B cell (primary cell): ENCODE measurements at regions of chr6 and their contacts with region 1.

Region 1: GRCh38 chr6:27893059-27893835 is 18.9 kb downstream of the OR2B2 start:
- DNase-seq: peak; percentile 97
- ATAC-seq: peak; percentile 67
- H3K4me3 ChIP-seq: peak overlapping the region; percentile 68 to 100 (median 88)
- H3K4me3 Mint-ChIP-seq: no peak overlapping the region
- H3K27ac ChIP-seq: peak overlapping the region; percentile 76 to 77
- H3K27ac Mint-ChIP-seq: no peak overlapping the region
- H3K4me1 ChIP-seq: peaks cover 18 to 38% of the 10 kb centered on the region in 2 donors
- H3K4me1 Mint-ChIP-seq: peaks cover 36% of the 10 kb centered on the region
- H3K27me3 ChIP-seq: no peaks in the 10 kb centered on the region
- H3K27me3 Mint-ChIP-seq: no peaks in the 10 kb centered on the region
- CTCF ChIP-seq: no peak

Region 2: GRCh38 chr6:26122793-26123674 is 1770.2 kb before region 1 on chr6:
- CTCF ChIA-PET with region 1: interaction called, 4 read pairs
- POLR2A ChIA-PET with region 1: interaction called, 7 read pairs
- intact Hi-C with region 1: loop called (anchors 5 kb)
- DNase-seq: peak; percentile 97
- ATAC-seq: peak; percentile 59
- H3K4me3 ChIP-seq: peak overlapping the region; percentile 87 to 100 (median 96)
- H3K4me3 Mint-ChIP-seq: peak overlapping the region; percentile 93
- H3K27ac ChIP-seq: peak overlapping the region; percentile 87 to 88
- H3K27ac Mint-ChIP-seq: peak overlapping the region; percentile 97
- H3K4me1 ChIP-seq: peaks cover 19 to 23% of the 10 kb centered on the region in 2 donors
- H3K4me1 Mint-ChIP-seq: peaks cover 26% of the 10 kb centered on the region
- H3K27me3 ChIP-seq: no peaks in the 10 kb centered on the region
- H3K27me3 Mint-ChIP-seq: no peaks in the 10 kb centered on the region
- CTCF ChIP-seq: no peak

Region 3: GRCh38 chr6:27146706-27147505 is 746.3 kb before region 1 on chr6:
- CTCF ChIA-PET with region 1: interaction called, 4 read pairs
- POLR2A ChIA-PET with region 1: interaction called, 81 read pairs
- intact Hi-C with region 1: loop called (anchors 1 kb)
- DNase-seq: peak; percentile 98
- ATAC-seq: peak; percentile 85
- H3K4me3 ChIP-seq: peak overlapping the region; percentile 72 to 100 (median 88)
- H3K4me3 Mint-ChIP-seq: no peak overlapping the region
- H3K27ac ChIP-seq: peak overlapping the region; percentile 76 to 92
- H3K27ac Mint-ChIP-seq: no peak overlapping the region
- H3K4me1 ChIP-seq: peaks cover 20 to 26% of the 10 kb centered on the region in 2 donors
- H3K4me1 Mint-ChIP-seq: peaks cover 17% of the 10 kb centered on the region
- H3K27me3 ChIP-seq: no peaks in the 10 kb centered on the region
- H3K27me3 Mint-ChIP-seq: no peaks in the 10 kb centered on the region
- CTCF ChIP-seq: no peak

Region 4: DNA sequence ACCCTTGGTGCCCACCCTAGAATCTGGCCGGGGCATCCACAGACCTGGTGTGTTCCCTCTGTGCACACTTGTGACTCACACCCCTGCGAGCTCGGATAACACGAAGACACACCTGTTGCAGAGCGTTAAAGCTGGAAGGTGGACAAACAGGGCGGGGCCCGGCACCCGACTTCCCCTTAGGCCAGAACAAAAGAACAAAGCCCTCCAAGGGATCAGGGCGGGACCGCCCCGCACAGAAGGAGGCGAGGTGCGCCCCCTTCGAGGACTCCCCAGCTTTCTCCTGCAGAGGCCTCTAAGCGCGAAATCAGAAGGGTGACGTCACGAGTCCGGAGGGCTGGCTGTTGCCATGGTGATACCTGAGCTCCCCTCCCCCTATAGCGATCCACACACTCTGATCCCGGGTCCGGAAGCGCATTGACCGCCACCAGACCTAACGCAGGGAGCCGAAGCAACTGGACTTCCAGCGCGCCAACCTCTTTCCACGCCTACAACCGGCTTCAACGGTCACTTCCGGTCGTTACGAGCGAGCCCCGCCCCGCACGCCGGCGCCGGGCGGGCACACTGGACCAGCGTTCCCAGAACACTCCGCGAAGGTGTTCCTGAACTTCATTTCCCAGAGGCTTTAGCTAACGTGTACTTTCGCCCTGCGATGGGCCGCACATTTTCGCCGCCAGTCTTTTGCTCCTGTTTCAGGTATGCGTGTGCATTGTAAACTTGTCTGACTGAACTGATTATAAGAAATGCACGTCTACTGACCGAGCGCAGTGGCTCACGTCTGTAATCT is 420.4 kb before region 1 on chr6 and contains the start of gene ZNF184:
- CTCF ChIA-PET with region 1: interaction called, 3 read pairs
- POLR2A ChIA-PET with region 1: interaction called, 3 read pairs
- intact Hi-C with region 1: loop called (anchors 2 kb)
- DNase-seq: peak; percentile 96
- ATAC-seq: peak; percentile 92
- H3K4me3 ChIP-seq: peak within 1 kb of the TSS; percentile 75 to 93 (median 83)
- H3K4me3 Mint-ChIP-seq: peak within 1 kb of the TSS; percentile 100
- H3K27ac ChIP-seq: peak within 1 kb of the TSS; percentile 89 to 97
- H3K27ac Mint-ChIP-seq: peak within 1 kb of the TSS; percentile 99
- H3K4me1 ChIP-seq: peaks cover 16 to 22% of the 10 kb centered on the region in 2 donors
- H3K4me1 Mint-ChIP-seq: peaks cover 44% of the 10 kb centered on the region
- H3K27me3 ChIP-seq: no peaks in the 10 kb centered on the region
- H3K27me3 Mint-ChIP-seq: no peaks in the 10 kb centered on the region
- CTCF ChIP-seq: peak; percentile 31
- total RNA-seq, gene ZNF184: 11.8 TPM in 2 replicates

Region 5: GRCh38 chr6:27772261-27773001 is 120.8 kb before region 1 on chr6:
- CTCF ChIA-PET with region 1: interaction called, 150 read pairs
- POLR2A ChIA-PET with region 1: interaction called, 5 read pairs
- intact Hi-C with region 1: loop called (anchors 1 kb)
- DNase-seq: peak; percentile 87
- ATAC-seq: peak; percentile 88
- H3K4me3 ChIP-seq: no peak overlapping the region
- H3K4me3 Mint-ChIP-seq: peak overlapping the region; percentile 65
- H3K27ac ChIP-seq: peak overlapping the region in 1 of 2 donors; percentile 2
- H3K27ac Mint-ChIP-seq: peak overlapping the region; percentile 84
- H3K4me1 ChIP-seq: peaks cover 26 to 29% of the 10 kb centered on the region in 2 donors
- H3K4me1 Mint-ChIP-seq: peaks cover 36% of the 10 kb centered on the region
- H3K27me3 ChIP-seq: peaks cover 0 to 4% (median 2%) of the 10 kb centered on the region in 4 experiments
- H3K27me3 Mint-ChIP-seq: peaks cover 10% of the 10 kb centered on the region
- CTCF ChIP-seq: peak; percentile 93

Region 6: GRCh38 chr6:27864906-27865849 is 28.1 kb before region 1 on chr6:
- CTCF ChIA-PET with region 1: interaction called, 92 read pairs
- POLR2A ChIA-PET with region 1: interaction called, 93 read pairs
- intact Hi-C with region 1: loop called (anchors 1 kb)
- DNase-seq: peak; percentile 97
- ATAC-seq: peak; percentile 80
- H3K4me3 ChIP-seq: peak overlapping the region; percentile 60 to 82 (median 69)
- H3K4me3 Mint-ChIP-seq: peak overlapping the region; percentile 97
- H3K27ac ChIP-seq: peak overlapping the region; percentile 81 to 83
- H3K27ac Mint-ChIP-seq: peak overlapping the region; percentile 97
- H3K4me1 ChIP-seq: peaks cover 13 to 35% of the 10 kb centered on the region in 2 donors
- H3K4me1 Mint-ChIP-seq: peaks cover 45% of the 10 kb centered on the region
- H3K27me3 ChIP-seq: no peaks in the 10 kb centered on the region
- H3K27me3 Mint-ChIP-seq: no peaks in the 10 kb centered on the region
- CTCF ChIP-seq: no peak

Region 7: GRCh38 chr6:28322661-28323060 is 429.4 kb after region 1 on chr6:
- CTCF ChIA-PET with region 1: no interaction called
- POLR2A ChIA-PET with region 1: no interaction called
- intact Hi-C with region 1: no loop called
- DNase-seq: no peak
- ATAC-seq: no peak
- H3K4me3 ChIP-seq: no peak overlapping the region
- H3K4me3 Mint-ChIP-seq: no peak overlapping the region
- H3K27ac ChIP-seq: no peak overlapping the region
- H3K27ac Mint-ChIP-seq: no peak overlapping the region
- H3K4me1 ChIP-seq: no peaks in the 10 kb centered on the region
- H3K4me1 Mint-ChIP-seq: no peaks in the 10 kb centered on the region
- H3K27me3 ChIP-seq: no peaks in the 10 kb centered on the region
- H3K27me3 Mint-ChIP-seq: peaks cover 4% of the 10 kb centered on the region
- CTCF ChIP-seq: no peak